ENCODE measurements at regions of chr12 and their contacts with region 1.

Region 1: DNA sequence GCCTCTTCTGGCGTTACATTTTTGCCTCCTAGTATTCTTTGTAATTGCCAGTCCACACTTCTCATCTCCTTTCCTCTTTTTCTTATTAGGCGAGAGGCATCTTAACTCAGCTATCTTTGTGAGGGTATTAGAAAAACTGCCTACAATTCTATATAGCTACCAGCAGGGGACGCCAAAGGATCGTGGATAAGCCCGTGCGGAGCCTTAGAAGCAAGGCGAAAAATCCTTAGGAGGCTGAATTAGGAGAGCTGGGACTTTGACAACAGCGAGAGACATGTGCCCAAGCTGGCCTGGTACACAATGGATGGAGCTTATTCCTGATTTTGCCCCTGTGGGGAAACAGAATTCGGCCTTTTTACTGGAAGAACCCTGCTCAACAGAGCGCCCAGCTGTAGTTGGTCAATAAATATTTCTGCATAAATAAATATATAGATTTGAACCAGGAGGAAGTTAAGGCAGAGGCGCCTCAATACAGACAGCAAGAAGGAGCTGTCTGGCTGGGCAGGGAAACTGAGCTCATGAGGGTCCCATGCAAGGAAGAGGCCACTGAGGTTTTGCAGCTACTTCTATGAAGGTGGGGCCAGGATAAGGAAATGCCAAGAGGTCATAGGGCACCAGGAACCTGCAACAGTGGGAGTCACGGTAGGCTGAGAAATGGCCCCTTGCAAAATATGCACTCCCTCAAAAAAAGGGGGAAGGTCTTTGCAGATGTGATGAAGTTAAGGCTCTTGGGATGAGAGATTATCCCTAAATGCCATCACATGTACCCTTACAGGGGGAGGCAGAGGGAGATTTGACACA is 14.6 kb upstream of the RBM19 start:
- DNase-seq: peak in 1 of 2 experiments; percentile 52
- H3K4me3 ChIP-seq: no peak overlapping the region
- H3K4me3 Mint-ChIP-seq: no peak overlapping the region
- H3K27ac Mint-ChIP-seq: no peak overlapping the region
- H3K4me1 ChIP-seq: no peaks in the 10 kb centered on the region
- H3K4me1 Mint-ChIP-seq: no peaks in the 10 kb centered on the region
- H3K27me3 ChIP-seq: no peaks in the 10 kb centered on the region
- H3K27me3 Mint-ChIP-seq: peaks cover 2% of the 10 kb centered on the region
- CTCF ChIP-seq: peak; percentile 93 to 95

Region 2: DNA sequence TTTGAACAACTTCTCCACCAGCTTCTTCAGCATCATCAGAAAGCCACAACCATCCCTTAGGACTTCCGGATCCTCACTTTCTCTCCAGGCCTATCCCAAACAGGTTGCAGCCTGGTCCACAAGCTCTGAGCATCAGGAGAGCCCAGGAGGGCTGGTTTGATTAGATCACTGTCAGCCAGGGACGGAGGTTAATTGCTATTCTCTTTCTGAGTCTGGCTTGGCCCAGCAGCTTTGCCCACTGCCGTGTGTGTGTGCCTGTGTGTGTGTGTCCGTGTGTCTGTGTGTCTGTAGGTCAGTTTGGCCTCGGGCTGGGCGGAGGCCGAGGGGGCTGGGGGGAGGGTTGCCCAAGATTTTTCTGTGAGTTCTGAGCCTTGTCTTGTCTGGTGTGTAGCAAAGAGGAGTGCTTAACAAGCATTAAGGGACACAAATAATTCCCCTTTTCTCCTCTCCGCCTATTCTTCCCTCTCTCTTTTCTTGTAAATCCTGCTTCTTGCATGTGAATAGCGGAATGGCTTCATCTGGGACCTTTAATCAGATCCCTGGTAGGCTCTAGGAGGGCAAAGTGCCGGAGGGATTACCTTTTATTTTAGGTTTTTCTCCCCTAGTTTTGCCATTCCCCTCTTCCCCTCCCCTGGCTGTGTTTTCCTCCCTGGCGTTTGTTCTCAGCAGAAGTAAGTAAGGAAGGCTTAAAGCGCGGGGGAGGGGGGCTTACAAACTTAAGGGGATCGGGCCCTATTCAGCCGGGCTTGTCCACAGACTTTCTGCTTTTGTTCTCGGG is 370.9 kb before region 1 on chr12:
- CTCF ChIA-PET with region 1: no interaction called
- POLR2A ChIA-PET with region 1: no interaction called
- intact Hi-C with region 1: no loop called
- DNase-seq: no peak
- H3K4me3 ChIP-seq: no peak overlapping the region
- H3K4me3 Mint-ChIP-seq: no peak overlapping the region
- H3K27ac Mint-ChIP-seq: no peak overlapping the region
- H3K4me1 ChIP-seq: no peaks in the 10 kb centered on the region
- H3K4me1 Mint-ChIP-seq: no peaks in the 10 kb centered on the region
- H3K27me3 ChIP-seq: no peaks in the 10 kb centered on the region; the same call in 1 of the 2 replicates
- H3K27me3 Mint-ChIP-seq: peaks cover 16% of the 10 kb centered on the region
- CTCF ChIP-seq: no peak

Region 3: DNA sequence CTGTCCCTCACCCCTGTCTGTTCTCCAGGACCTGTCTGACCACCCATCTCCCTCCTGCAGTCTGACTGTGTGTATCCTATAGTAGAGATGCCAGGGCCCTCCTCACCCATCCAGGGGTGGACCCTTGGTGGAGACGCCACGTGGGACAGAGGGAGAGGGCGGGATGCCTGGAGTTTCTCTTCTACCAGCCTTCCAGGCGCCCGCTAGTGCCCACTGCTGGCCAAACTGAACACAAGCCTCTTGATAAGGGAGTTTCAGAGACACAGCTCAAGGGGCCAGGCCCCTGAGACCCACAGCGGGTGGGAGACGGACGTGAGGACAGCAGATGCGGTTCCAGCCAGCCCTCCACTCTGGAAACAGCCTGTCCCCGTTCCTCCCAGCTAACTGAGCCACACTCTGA is 161.9 kb before region 1 on chr12:
- CTCF ChIA-PET with region 1: no interaction called
- POLR2A ChIA-PET with region 1: no interaction called
- intact Hi-C with region 1: no loop called
- DNase-seq: peak in 1 of 2 experiments; percentile 17
- H3K4me3 ChIP-seq: no peak overlapping the region
- H3K4me3 Mint-ChIP-seq: no peak overlapping the region
- H3K27ac Mint-ChIP-seq: no peak overlapping the region
- H3K4me1 ChIP-seq: no peaks in the 10 kb centered on the region
- H3K4me1 Mint-ChIP-seq: no peaks in the 10 kb centered on the region
- H3K27me3 ChIP-seq: no peaks in the 10 kb centered on the region
- H3K27me3 Mint-ChIP-seq: no peaks in the 10 kb centered on the region
- CTCF ChIP-seq: peak in 1 of 2 experiments; percentile 37

Region 4: DNA sequence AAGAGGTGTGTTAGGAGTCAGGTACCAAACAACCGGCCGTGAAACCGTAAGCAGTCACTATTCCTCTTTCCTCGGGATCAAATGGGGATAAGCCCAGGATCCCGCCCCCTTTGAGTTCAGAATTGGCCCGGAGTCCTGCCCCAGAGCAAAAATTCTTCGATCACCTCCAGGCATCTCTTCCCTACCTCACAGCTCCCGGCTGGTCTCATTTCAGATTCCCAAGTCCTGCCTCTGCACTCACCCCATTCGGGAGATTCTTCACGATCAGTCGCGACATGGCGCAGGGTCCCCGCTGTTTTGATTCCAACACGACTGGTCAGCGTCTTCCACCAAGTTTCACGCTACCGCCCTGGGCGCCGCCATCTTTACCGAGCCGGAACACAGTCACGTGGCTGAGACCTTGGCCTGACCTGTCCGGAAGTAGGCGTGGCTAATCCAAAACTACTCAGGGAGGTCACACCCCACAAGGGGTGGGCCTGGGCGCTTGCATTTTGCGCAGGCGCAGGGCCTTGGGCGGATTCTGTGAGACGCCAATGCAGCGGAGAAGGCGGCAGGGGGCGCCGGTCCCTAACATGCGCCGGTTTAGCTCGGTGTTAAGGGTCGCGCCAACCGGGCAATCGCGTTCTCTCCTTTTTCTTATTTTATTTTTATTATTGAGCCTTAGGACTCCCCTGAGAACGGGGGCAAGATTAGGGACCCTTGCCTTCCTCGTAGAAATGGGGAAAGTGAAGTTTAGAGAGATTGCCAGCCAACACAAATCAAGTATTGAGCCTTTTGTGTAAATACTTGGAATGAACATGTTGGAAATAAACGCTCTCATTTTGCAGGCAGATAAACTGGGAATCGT is 14.6 kb before region 1 on chr12 and contains the start of gene RBM19:
- CTCF ChIA-PET with region 1: interaction called, 10 read pairs
- POLR2A ChIA-PET with region 1: interaction called, 4 read pairs
- intact Hi-C with region 1: no loop called
- DNase-seq: peak; percentile 97
- H3K4me3 ChIP-seq: peak within 1 kb of the TSS; percentile 75
- H3K4me3 Mint-ChIP-seq: peak within 1 kb of the TSS; percentile 91
- H3K27ac Mint-ChIP-seq: peak within 1 kb of the TSS; percentile 92
- H3K4me1 ChIP-seq: no peaks in the 10 kb centered on the region
- H3K4me1 Mint-ChIP-seq: peaks cover 16% of the 10 kb centered on the region
- H3K27me3 ChIP-seq: no peaks in the 10 kb centered on the region; the same call in 1 of the 2 replicates
- H3K27me3 Mint-ChIP-seq: peaks cover 15% of the 10 kb centered on the region
- CTCF ChIP-seq: peak; percentile 88 to 94
- total RNA-seq, gene RBM19: 35.7 and 41.4 TPM in 2 replicates

Region 5: GRCh38 chr12:114213055-114213581 is 232.4 kb after region 1 on chr12:
- CTCF ChIA-PET with region 1: interaction called, 6 read pairs
- POLR2A ChIA-PET with region 1: no interaction called
- intact Hi-C with region 1: loop called (anchors 5 kb)
- DNase-seq: no peak
- H3K4me3 ChIP-seq: no peak overlapping the region
- H3K4me3 Mint-ChIP-seq: no peak overlapping the region
- H3K27ac Mint-ChIP-seq: no peak overlapping the region
- H3K4me1 ChIP-seq: no peaks in the 10 kb centered on the region
- H3K4me1 Mint-ChIP-seq: no peaks in the 10 kb centered on the region
- H3K27me3 ChIP-seq: no peaks in the 10 kb centered on the region; the same call in 1 of the 2 replicates
- H3K27me3 Mint-ChIP-seq: peaks cover 16% of the 10 kb centered on the region
- CTCF ChIP-seq: peak; percentile 16 to 17

Region 6: DNA sequence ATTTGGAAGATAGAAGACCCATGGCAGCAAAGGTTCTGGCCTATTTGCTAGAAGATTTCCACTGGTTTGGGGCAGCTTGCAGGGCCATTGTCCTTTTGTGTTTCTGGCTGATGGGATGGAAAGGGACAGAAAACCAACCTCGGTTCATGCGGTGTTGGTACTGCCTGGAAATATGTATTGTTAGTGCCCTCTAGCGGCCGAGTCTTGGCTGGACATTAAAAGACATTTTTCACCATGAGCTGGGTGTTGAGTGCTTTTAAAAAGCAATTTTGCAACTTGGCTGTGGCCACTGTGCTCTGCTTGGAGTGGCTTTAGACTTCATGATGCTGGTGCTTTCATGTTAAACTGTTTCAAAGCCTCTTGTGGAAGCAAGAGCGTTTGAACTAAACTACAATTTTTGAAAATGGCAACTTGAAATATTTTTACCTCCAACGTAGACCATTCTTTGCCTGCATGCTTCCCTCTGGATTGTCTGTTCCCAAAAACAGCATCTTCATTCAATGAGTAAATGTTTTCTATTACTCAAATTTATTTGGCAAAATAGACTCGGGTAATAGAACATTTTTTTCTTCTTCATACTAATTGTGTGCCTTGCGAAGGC is 527.9 kb after region 1 on chr12:
- CTCF ChIA-PET with region 1: interaction called, 23 read pairs
- POLR2A ChIA-PET with region 1: no interaction called
- intact Hi-C with region 1: loop called (anchors 1 kb)
- DNase-seq: peak; percentile 67 to 69
- H3K4me3 ChIP-seq: no peak overlapping the region
- H3K4me3 Mint-ChIP-seq: no peak overlapping the region
- H3K27ac Mint-ChIP-seq: no peak overlapping the region
- H3K4me1 ChIP-seq: no peaks in the 10 kb centered on the region
- H3K4me1 Mint-ChIP-seq: no peaks in the 10 kb centered on the region
- H3K27me3 ChIP-seq: no peaks in the 10 kb centered on the region; the same call in 1 of the 2 replicates
- H3K27me3 Mint-ChIP-seq: peaks cover 14% of the 10 kb centered on the region
- CTCF ChIP-seq: peak; percentile 58 to 69

Region 7: GRCh38 chr12:115916910-115917668 is 1936.4 kb after region 1 on chr12:
- CTCF ChIA-PET with region 1: no interaction called
- POLR2A ChIA-PET with region 1: no interaction called
- intact Hi-C with region 1: loop called (anchors 10 kb)
- DNase-seq: peak; percentile 74 to 91
- H3K4me3 ChIP-seq: peak overlapping the region; percentile 38
- H3K4me3 Mint-ChIP-seq: peak overlapping the region; percentile 67
- H3K27ac Mint-ChIP-seq: no peak overlapping the region
- H3K4me1 ChIP-seq: no peaks in the 10 kb centered on the region
- H3K4me1 Mint-ChIP-seq: no peaks in the 10 kb centered on the region
- H3K27me3 ChIP-seq: no peaks in the 10 kb centered on the region; the same call in 1 of the 2 replicates
- H3K27me3 Mint-ChIP-seq: peaks cover 4% of the 10 kb centered on the region
- CTCF ChIP-seq: peak; percentile 90 to 94

Measured in Caco-2 (cell line).